GM10248 (cell line): ENCODE measurements at regions of chr6 and their contacts with region 1.

Region 1: GRCh38 chr6:24581084-24581669 is 64.8 kb downstream of the KIAA0319 start:
- DNase-seq: peak; percentile 49
- CTCF ChIP-seq: peak; percentile 86

Region 2: DNA sequence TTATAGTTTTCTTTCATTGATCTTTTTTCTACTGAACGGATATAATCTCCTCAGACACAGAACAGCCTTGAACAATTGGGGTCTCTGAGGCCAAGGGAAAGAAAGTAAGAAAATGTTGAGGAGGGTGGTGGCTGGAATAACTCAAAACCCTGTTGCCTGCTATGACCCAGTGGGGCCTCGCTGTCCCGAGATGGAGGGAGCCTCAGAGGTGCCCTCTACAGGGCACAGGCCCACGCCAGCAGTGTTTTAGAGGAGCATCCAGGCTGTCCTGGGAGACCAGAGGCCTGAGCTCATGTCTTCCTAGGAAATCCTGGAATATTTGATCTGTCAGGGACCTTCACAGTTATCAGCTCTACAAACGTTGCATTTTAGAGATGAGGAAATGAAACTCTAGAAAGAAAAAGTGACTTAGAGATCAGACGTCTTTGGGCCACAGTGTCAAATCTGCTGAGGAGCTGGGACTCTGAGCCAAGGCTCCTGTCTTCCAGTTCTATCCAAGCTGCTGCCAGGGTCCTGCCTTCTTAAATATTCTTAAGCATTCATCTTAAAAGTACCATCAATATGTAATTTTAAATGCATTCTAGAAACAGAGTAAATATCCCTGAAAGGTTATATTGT is 60.1 kb before region 1 on chr6:
- CTCF ChIA-PET with region 1: interaction called, 50 read pairs
- POLR2A ChIA-PET with region 1: no interaction called
- DNase-seq: peak; percentile 59
- CTCF ChIP-seq: peak; percentile 76

Region 3: DNA sequence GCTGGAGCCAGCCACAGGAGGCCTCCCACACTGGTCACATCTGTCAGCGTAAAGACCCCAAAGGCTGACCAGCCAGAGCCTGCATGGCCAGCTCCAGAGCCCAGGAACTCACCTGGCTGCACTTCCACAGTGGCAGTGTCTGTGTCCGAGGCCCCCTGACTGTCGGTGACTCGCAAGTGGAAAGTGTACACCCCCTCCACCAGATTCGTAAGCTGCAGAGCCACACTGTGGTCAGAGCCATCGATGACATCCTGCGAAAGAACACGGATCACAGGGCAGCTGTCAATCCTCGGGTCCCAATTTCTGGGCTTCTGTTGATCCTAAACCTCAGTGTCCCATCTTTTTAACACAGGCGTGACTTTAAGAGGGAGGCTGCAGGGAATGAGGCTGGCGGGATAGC is 17.1 kb before region 1 on chr6:
- CTCF ChIA-PET with region 1: interaction called, 21 read pairs
- POLR2A ChIA-PET with region 1: no interaction called
- DNase-seq: no peak
- CTCF ChIP-seq: no peak

Region 4: DNA sequence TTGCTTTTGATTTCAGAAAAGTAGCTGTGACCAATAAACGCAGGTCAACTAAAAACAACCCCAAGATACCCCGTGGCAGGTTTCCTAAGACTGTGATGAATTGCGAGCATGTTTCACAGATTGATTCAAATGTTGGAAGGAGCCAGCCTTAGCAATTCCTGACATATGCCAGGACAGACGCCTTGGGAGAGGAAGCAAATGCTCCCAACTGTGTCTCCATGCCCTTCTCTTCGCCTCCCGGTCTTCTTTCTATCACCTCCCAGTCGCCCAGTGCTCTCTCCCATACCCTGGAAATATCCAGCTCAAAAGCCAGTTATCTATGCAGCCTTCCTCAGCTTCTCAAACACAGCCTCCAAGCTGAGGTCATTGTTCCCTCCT is 32.9 kb after region 1 on chr6:
- CTCF ChIA-PET with region 1: interaction called, 10 read pairs
- POLR2A ChIA-PET with region 1: no interaction called
- DNase-seq: no peak
- CTCF ChIP-seq: no peak

Region 5: GRCh38 chr6:24666097-24666640 is 85.0 kb after region 1 on chr6:
- CTCF ChIA-PET with region 1: interaction called, 11 read pairs
- POLR2A ChIA-PET with region 1: no interaction called
- DNase-seq: peak; percentile 43
- CTCF ChIP-seq: no peak

Region 6: DNA sequence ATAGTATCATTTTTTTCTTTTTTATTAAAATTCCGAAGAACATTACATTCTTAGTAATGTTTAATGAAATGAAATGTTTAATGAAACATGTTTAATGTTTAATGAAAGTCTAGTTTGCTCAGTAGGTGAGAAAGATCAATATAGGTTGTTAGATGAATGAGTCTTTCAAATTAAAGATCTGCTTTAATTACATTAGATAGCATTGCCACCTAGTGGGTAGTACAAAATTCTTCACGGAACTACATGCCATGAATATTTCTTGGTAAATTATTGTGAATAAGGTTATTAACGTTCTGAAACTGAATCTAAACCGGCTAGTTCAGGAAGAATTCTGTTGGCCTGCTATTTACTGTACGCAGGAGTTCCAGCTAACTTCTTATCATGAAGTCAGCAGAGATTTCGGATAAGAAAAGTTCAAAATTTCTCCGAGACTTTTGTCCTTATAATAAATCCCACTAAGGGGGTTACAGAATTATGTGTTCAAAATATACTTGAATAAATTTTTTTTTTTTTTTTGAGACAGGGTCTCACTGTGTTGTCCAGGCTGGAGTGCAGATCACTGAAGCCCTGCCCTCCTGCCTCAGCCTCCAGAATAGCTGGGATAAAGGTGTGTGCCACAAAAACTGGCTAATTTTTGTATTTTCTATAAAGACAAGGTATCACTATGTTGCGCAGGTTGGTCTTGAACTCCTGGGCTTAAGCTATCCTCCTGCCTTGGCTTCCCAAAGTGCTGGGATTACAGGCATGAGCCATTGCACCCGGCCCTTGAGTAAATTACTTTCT is 185.7 kb after region 1 on chr6:
- CTCF ChIA-PET with region 1: interaction called, 54 read pairs
- POLR2A ChIA-PET with region 1: interaction called, 7 read pairs
- DNase-seq: peak; percentile 63
- CTCF ChIP-seq: peak; percentile 49

Region 7: GRCh38 chr6:25138237-25139125 is 557.3 kb after region 1 on chr6:
- CTCF ChIA-PET with region 1: no interaction called
- POLR2A ChIA-PET with region 1: no interaction called
- DNase-seq: peak; percentile 29
- CTCF ChIP-seq: peak; percentile 20